Activated T-helper 1 cell treated with anti-CD3 and anti-CD28 coated beads, Interleukin-12 subunit alpha, Interleukin-12 subunit beta, Interleukin-2, Interleukin-4 antibody, amounts not matched to agents 30 ng/mL and 10 ng/mL and 1 ng/mL, durations not matched to agents 14 hours and 24 hours and 36 hours (primary cell): ENCODE measurements at regions of chr21 and their contacts with region 1.

Region 1: GRCh38 chr21:31725202-31725839 is 6.6 kb downstream of the SCAF4 start:
- DNase-seq: no peak
- H3K4me3 Mint-ChIP-seq: peak overlapping the region; percentile 49
- H3K27ac Mint-ChIP-seq: peak overlapping the region; percentile 78
- H3K4me1 Mint-ChIP-seq: peaks cover 34% of the 10 kb centered on the region
- H3K27me3 Mint-ChIP-seq: no peaks in the 10 kb centered on the region

Region 2: DNA sequence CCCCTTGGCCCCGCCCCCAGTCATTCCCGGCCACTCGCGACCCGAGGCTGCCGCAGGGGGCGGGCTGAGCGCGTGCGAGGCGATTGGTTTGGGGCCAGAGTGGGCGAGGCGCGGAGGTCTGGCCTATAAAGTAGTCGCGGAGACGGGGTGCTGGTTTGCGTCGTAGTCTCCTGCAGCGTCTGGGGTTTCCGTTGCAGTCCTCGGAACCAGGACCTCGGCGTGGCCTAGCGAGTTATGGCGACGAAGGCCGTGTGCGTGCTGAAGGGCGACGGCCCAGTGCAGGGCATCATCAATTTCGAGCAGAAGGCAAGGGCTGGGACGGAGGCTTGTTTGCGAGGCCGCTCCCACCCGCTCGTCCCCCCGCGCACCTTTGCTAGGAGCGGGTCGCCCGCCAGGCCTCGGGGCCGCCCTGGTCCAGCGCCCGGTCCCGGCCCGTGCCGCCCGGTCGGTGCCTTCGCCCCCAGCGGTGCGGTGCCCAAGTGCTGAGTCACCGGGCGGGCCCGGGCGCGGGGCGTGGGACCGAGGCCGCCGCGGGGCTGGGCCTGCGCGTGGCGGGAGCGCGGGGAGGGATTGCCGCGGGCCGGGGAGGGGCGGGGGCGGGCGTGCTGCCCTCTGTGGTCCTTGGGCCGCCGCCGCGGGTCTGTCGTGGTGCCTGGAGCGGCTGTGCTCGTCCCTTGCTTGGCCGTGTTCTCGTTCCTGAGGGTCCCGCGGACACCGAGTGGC is 65.6 kb before region 1 on chr21 and contains the start of gene SOD1:
- intact Hi-C with region 1: no loop called
- DNase-seq: peak; percentile 96
- H3K4me3 Mint-ChIP-seq: peak within 1 kb of the TSS; percentile 99
- H3K27ac Mint-ChIP-seq: peak within 1 kb of the TSS; percentile 100
- H3K4me1 Mint-ChIP-seq: peaks cover 76% of the 10 kb centered on the region
- H3K27me3 Mint-ChIP-seq: no peaks in the 10 kb centered on the region
- total RNA-seq, gene SOD1: 346 and 354 TPM in 2 replicates

Region 3: GRCh38 chr21:31708541-31708940 is 16.8 kb before region 1 on chr21:
- intact Hi-C with region 1: loop called (anchors 2 kb)
- DNase-seq: no peak
- H3K4me3 Mint-ChIP-seq: no peak overlapping the region
- H3K27ac Mint-ChIP-seq: no peak overlapping the region
- H3K4me1 Mint-ChIP-seq: peaks cover 25% of the 10 kb centered on the region
- H3K27me3 Mint-ChIP-seq: no peaks in the 10 kb centered on the region

Region 4: GRCh38 chr21:31713973-31714740 is 11.2 kb before region 1 on chr21:
- intact Hi-C with region 1: loop called (anchors 1 kb)
- DNase-seq: no peak
- H3K4me3 Mint-ChIP-seq: no peak overlapping the region
- H3K27ac Mint-ChIP-seq: peak overlapping the region; percentile 66
- H3K4me1 Mint-ChIP-seq: peaks cover 35% of the 10 kb centered on the region
- H3K27me3 Mint-ChIP-seq: no peaks in the 10 kb centered on the region

Region 5: DNA sequence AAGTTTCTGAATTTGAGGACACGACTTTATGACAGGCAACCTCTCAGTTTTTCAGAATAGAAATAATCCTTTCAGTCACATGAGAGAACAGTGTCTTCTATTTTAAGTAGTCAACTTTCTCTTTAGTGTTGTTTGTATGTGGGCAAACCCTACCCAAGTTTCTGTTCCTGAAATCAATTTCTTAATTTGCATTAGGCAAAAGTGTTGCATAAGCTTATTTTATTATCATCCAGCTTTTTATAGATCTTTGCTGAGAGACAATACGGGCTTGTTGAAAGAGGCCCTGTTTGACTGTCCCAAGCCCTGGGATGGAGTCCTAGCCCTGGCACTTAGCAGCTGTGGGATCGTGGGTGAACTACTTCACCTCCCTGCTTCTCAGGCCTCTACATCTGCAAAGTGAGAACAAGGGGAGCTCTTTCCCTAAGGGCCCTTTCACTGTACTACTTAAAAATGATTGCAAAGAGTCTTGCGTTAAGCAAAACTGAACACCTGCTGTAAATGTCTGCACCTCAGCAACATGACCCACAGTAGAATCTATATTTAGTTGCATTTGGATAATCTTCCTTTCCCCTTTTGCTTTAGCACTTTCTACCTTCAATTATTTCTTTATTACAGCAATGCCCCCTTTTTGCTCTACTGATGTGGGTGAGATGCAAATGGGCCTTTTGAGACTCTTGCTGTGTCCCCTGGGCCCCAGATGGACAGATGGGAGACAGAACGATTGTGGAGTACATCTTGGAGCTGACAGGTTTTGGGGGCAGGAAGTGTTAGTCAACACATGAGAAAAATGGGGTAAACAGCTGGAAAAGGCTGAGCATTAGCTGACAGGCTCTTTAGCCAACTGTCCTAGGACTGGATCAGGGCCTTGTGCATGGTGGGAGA is 47.6 kb after region 1 on chr21:
- intact Hi-C with region 1: no loop called
- DNase-seq: no peak
- H3K4me3 Mint-ChIP-seq: no peak overlapping the region
- H3K27ac Mint-ChIP-seq: no peak overlapping the region
- H3K4me1 Mint-ChIP-seq: no peaks in the 10 kb centered on the region
- H3K27me3 Mint-ChIP-seq: peaks cover 2% of the 10 kb centered on the region